Mammary epithelial cell (primary cell): ENCODE measurements at regions of chr1 and their contacts with region 1.

Region 1: DNA sequence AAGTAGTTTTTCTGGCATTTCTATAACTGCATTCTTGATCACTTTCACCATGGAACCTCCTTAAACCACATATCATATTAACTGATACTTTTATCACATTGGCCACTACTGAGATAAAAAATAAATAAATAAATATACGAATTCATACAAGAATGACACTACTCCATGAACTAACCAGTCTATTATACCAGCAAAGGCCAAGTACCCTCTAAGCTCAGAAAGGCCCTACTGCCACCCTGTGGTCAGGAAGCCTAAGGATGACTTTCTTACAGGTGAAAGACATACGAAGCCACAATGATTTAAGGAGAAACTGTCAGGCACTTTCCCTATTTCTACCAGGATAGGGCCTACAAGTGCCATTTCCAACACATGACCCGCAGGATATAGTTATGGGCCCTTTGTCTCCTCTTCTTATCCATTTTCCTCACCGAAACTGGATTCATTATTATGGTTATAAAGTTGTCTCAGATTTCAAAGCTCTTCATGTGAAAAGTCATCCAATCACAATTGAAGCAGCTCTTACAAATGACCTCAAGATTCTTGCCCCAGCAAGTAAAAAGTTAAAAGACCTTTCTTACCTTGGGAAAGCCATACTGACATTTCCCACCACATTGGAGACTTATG is 23.9 kb downstream of the DNAJC8 start:
- DNase-seq: peak; percentile 62
- H3K4me3 ChIP-seq: no peak overlapping the region
- H3K27ac ChIP-seq: no peak overlapping the region
- H3K4me1 ChIP-seq: no peaks in the 10 kb centered on the region
- H3K27me3 ChIP-seq: no peaks in the 10 kb centered on the region
- CTCF ChIP-seq: peak; percentile 73 to 84

Region 2: GRCh38 chr1:28010969-28011368 is 198.0 kb before region 1 on chr1:
- CTCF ChIA-PET with region 1: interaction called, 8 read pairs
- dilution Hi-C with region 1: no loop called
- in situ Hi-C with region 1: no loop called
- intact Hi-C with region 1: loop called (anchors 10 kb)
- DNase-seq: no peak
- H3K4me3 ChIP-seq: no peak overlapping the region
- H3K27ac ChIP-seq: no peak overlapping the region
- H3K4me1 ChIP-seq: no peaks in the 10 kb centered on the region
- H3K27me3 ChIP-seq: no peaks in the 10 kb centered on the region
- CTCF ChIP-seq: no peak

Region 3: DNA sequence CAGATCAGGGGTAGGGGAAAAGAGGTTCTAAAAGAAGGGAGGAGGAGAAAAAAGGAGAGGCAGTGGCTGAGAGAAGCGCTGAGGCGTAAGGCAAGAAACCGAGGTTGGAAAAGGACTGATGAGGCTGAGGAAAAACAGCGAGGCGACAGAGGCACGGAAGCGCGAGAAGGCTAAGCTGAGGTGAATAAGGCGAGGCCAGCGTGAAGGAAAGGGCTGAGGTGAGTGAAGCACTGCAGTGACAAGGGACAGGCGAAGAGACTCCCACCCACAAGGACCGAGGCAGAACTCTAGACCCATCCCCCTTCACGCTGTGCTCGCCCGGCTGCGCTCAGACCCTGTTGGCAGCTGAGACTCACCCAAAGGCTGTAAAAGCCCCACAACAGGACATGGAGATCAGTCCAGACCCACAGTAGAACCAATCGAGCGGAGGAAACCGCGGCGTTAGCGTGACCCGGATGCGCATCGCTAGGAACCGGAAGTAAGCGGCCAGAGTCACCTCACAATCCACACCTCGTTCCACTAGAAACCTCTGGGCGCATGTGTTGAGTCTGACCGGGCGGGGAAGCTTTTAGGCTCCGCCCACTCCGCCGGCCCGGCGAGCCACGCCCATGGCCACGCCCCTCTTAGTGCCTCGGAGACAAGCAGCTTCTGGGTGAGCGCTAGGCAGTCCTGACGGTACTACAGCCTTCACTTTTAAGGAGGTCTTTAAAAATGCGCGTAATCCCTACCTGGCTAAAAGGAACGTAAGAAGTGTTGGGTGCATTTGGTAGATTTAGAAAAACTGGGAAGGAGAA is 120.6 kb before region 1 on chr1 and contains the start of gene EYA3:
- CTCF ChIA-PET with region 1: interaction called, 15 read pairs
- dilution Hi-C with region 1: no loop called
- in situ Hi-C with region 1: loop called in 1 of 2 experiments (anchors 5 kb)
- intact Hi-C with region 1: loop called (anchors 1 kb)
- DNase-seq: peak; percentile 98
- H3K4me3 ChIP-seq: peak within 1 kb of the TSS; percentile 74 to 85 (median 75)
- H3K27ac ChIP-seq: peak within 1 kb of the TSS; percentile 85
- H3K4me1 ChIP-seq: peaks cover 11% of the 10 kb centered on the region
- H3K27me3 ChIP-seq: no peaks in the 10 kb centered on the region
- CTCF ChIP-seq: no peak
- total RNA-seq, gene EYA3: 12.3 to 21.9 TPM

Region 4: GRCh38 chr1:28306301-28306954 is 97.5 kb after region 1 on chr1:
- CTCF ChIA-PET with region 1: no interaction called
- dilution Hi-C with region 1: loop called (anchors 5 kb)
- in situ Hi-C with region 1: no loop called
- intact Hi-C with region 1: no loop called
- DNase-seq: no peak
- H3K4me3 ChIP-seq: no peak overlapping the region
- H3K27ac ChIP-seq: no peak overlapping the region
- H3K4me1 ChIP-seq: peaks cover 1% of the 10 kb centered on the region
- H3K27me3 ChIP-seq: no peaks in the 10 kb centered on the region
- CTCF ChIP-seq: no peak